Activated T-helper 2 cell treated with anti-CD3 and anti-CD28 coated beads, Interferon-gamma antibody, Interleukin-2, Interleukin-4, amounts not matched to agents 10 μg/mL and 5 μg/mL and 100 μg/mL, durations not matched to agents 14 hours and 24 hours and 36 hours (primary cell): ENCODE measurements at regions of chr5 and their contacts with region 1.

Region 1: DNA sequence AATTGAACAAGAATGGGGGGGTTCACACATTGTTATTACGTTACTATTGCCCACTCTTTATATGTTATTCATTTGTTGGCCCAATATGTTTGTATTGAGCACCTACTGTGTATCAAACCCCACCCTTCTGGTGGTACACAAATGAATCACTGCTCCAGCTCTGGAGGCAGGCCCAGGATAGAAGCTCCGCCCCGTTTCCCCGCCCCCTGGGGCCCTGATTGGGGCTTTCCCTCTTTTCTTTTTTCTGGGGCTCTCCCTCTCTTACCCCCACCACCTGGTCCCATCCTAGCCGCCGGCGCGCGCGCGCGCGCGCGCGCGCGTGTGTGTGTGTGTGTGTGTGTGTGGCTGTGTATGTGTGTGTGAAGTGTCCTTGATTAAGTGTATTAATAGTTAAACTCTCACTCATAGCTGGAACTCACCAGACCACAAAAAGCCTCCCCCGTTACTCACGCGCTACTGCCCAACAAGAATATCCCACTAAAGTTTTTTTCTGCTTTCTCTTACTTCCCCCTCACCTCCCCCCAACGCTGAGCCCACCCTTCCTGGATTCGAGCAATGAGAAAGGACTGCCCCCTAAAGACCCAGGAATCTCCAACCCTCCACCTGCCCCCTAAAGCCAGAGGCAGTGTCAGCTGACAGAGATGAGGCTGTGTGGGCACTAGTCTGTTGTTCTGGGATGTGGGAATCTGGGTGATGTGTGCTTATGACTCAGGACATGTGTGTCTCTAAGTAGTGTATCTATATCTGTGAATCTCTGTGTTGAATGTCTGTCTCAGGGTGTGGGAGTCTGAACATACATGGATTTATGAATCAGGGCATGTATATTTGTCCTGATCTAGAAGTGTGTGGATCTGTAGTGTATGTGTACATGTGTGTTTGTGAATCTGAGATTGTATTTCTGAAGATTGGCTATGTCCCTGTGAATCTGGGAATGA is 4.0 kb downstream of the CXXC5 start:
- DNase-seq: peak; percentile 44
- H3K4me3 Mint-ChIP-seq: no peak overlapping the region
- H3K27ac Mint-ChIP-seq: no peak overlapping the region
- H3K4me1 Mint-ChIP-seq: peaks cover 25% of the 10 kb centered on the region
- H3K27me3 Mint-ChIP-seq: peaks cover 40% of the 10 kb centered on the region

Region 2: DNA sequence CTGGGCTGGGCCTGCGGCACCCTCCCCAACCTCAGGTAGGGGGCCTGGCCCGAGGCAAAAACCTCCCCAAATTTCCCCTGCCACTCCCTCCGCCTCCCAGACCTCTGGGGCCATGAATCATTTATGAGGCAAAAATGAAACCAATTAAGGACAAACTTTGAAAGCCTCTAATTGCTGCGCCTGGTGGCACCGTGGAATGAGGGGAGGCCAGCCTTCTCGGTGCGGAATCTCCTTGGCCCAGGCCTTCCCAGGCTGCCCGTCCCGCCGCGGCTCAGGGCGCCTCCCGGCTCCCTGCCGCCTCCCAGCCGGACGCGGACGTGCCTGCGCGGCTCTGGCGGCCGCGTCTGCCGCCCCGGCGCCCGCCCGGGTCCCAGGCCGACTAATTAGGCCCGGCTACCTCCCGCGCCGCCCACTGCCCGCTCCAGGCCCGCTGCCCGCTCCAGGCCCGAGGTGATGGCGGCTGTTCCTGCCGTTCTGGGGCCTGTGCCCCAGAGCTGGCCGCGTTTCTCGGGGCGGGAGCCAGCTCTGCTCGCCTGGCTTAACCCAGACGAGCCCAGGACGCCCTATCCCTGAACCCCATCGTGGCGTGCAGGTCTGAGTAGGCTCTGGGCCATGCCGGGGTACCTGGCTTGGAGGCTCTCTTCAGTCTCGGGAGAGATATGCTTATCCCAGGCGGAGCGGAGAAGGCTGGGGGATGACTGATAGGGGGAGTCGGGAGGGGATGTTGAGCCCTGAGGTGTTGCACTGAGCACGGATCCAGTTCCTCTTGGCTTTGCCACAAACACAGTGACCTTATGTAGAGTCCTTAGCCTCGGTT is 16.2 kb after region 1 on chr5:
- intact Hi-C with region 1: loop called (anchors 2 kb)
- DNase-seq: peak; percentile 24
- H3K4me3 Mint-ChIP-seq: peak overlapping the region; percentile 40
- H3K27ac Mint-ChIP-seq: no peak overlapping the region
- H3K4me1 Mint-ChIP-seq: peaks cover 26% of the 10 kb centered on the region
- H3K27me3 Mint-ChIP-seq: peaks cover 5% of the 10 kb centered on the region